Psoas muscle (tissue), 8 donors: ENCODE measurements at regions of chr2 and their contacts with region 1.

Region 1: GRCh38 chr2:58054264-58054663 is 7.7 kb downstream of the VRK2 start:
- DNase-seq: no peak
- ATAC-seq: no peak
- H3K4me3 ChIP-seq: no peak overlapping the region
- H3K27ac ChIP-seq: no peak overlapping the region
- H3K4me1 ChIP-seq: peaks cover 20% of the 10 kb centered on the region
- H3K27me3 ChIP-seq: no peaks in the 10 kb centered on the region
- CTCF ChIP-seq: no peak

Region 2: GRCh38 chr2:58131191-58132011 is 77.1 kb after region 1 on chr2:
- intact Hi-C with region 1: loop called in 1 of 2 experiments (anchors 10 kb)
- DNase-seq: peak in 1 of 2 donors; percentile 40
- ATAC-seq: no peak
- H3K4me3 ChIP-seq: no peak overlapping the region
- H3K27ac ChIP-seq: no peak overlapping the region
- H3K4me1 ChIP-seq: no peaks in the 10 kb centered on the region
- H3K27me3 ChIP-seq: no peaks in the 10 kb centered on the region
- CTCF ChIP-seq: no peak